ENCODE measurements at regions of chr17 and their contacts with region 1.

Region 1: DNA sequence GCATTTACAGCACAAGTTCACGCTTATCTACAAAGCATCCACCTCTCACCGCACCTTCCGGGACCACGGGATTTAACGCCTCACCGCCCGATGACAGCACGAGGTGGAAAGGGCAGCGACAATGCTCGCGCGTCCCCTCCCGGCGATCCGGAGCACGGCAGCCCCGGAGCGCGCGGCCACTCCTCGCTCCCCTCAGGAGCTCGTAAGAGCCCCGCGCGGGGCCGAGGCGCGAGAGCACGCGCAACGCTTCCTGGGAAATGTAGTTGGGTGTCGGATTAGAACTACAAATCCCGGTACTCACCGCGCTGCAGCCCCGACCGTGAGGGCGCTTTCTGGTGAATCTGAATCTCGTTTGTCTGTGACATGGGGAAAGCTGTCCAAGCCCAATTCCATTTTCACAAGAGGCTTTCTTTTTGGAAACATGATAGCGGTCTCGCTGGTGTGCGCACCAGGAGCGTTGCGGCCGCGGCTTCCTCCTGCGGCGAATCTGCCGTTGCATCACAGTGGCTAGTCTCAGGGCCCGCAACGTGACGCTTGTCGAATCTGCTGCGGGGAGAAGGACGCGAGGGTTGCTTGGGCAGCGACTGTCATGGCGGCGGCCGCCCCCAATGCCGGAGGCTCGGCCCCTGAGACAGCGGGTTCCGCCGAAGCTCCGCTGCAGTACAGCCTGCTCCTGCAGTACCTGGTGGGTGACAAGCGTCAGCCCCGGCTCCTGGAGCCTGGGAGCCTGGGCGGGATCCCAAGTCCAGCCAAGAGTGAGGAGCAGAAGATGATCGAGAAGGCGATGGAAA is at the start of gene TIMM22:
- DNase-seq: peak; percentile 88 to 91
- ATAC-seq: peak; percentile 93 to 94
- H3K4me3 ChIP-seq: peak within 1 kb of the TSS; percentile 75 to 98 (median 97)
- H3K27ac ChIP-seq: peak within 1 kb of the TSS; percentile 88 to 95 (median 92)
- H3K4me1 ChIP-seq: peaks cover 40 to 41% of the 10 kb centered on the region in 2 donors
- H3K27me3 ChIP-seq: no peaks in the 10 kb centered on the region
- CTCF ChIP-seq: peak; percentile 97 to 99 (median 98)
- POLR2A ChIP-seq: peak; percentile 76 to 83
- total RNA-seq, gene TIMM22: 14.4 to 16.1 (median 15.3) TPM

Region 2: DNA sequence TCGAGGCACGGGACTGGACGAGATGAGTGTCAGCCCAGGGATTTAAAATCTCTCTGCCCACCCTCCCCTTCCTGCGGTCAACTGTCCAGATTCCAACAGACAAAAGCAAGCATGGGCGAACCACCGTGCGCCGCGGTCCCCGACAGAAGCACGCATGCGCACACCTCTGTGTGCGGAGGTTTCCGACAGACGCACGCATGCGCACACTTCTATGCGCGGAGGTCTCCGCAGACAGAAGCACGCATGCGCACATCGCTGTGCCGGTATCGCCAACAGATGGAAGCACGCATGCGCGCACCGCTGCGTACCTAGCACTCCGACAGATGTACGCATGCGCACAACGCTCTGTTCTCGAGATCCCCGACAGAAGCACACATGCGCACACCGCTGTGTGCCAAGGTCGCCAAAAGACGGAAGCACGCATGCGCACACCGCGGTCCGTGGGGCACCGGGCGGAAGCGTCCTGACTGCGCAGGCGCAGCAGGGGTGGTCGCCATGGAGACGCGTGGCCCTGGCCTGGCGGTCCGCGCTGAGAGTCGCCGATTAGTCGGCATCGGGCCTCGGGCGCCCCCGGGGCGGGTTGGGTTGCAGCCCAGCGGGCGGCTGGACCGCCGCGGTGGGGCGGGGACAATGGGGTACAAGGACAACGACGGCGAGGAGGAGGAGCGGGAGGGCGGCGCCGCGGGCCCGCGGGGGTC is 586.8 kb before region 1 on chr17:
- in situ Hi-C with region 1: no loop called
- intact Hi-C with region 1: loop called (anchors 5 kb)
- DNase-seq: peak; percentile 99
- ATAC-seq: peak; percentile 97 to 98
- H3K4me3 ChIP-seq: peak overlapping the region; percentile 70 to 94 (median 82)
- H3K27ac ChIP-seq: peak overlapping the region; percentile 70 to 80 (median 72)
- H3K4me1 ChIP-seq: peaks cover 13 to 14% of the 10 kb centered on the region in 2 donors
- H3K27me3 ChIP-seq: no peaks in the 10 kb centered on the region
- CTCF ChIP-seq: no peak
- POLR2A ChIP-seq: peak in 1 of 2 donors; percentile 49

Region 3: GRCh38 chr17:794876-795275 is 201.9 kb before region 1 on chr17:
- in situ Hi-C with region 1: no loop called
- intact Hi-C with region 1: loop called (anchors 5 kb)
- DNase-seq: peak; percentile 79 to 82
- ATAC-seq: peak; percentile 76 to 80
- H3K4me3 ChIP-seq: peak overlapping the region; percentile 27 to 74 (median 51)
- H3K27ac ChIP-seq: peak overlapping the region; percentile 67 to 78 (median 74)
- H3K4me1 ChIP-seq: peaks cover 27 to 30% of the 10 kb centered on the region in 2 donors
- H3K27me3 ChIP-seq: no peaks in the 10 kb centered on the region
- CTCF ChIP-seq: peak; percentile 90 to 96 (median 92)
- POLR2A ChIP-seq: no peak

Region 4: GRCh38 chr17:869567-870525 is 126.9 kb before region 1 on chr17:
- in situ Hi-C with region 1: no loop called
- intact Hi-C with region 1: loop called (anchors 1 kb)
- DNase-seq: peak; percentile 90 to 97
- ATAC-seq: peak; percentile 78
- H3K4me3 ChIP-seq: peak overlapping the region; percentile 24 to 55 (median 42)
- H3K27ac ChIP-seq: peak overlapping the region; percentile 92 to 99 (median 96)
- H3K4me1 ChIP-seq: peaks cover 35 to 38% of the 10 kb centered on the region in 2 donors
- H3K27me3 ChIP-seq: no peaks in the 10 kb centered on the region
- CTCF ChIP-seq: peak in 2 of 5 experiments; percentile 11
- POLR2A ChIP-seq: peak; percentile 69 to 75

Region 5: GRCh38 chr17:969811-970355 is 26.9 kb before region 1 on chr17:
- in situ Hi-C with region 1: no loop called
- intact Hi-C with region 1: no loop called
- DNase-seq: no peak
- ATAC-seq: peak; percentile 40 to 44
- H3K4me3 ChIP-seq: peak overlapping the region; percentile 11 to 48 (median 28)
- H3K27ac ChIP-seq: peak overlapping the region; percentile 45 to 77 (median 64)
- H3K4me1 ChIP-seq: peaks cover 17 to 32% of the 10 kb centered on the region in 2 donors
- H3K27me3 ChIP-seq: no peaks in the 10 kb centered on the region
- CTCF ChIP-seq: no peak
- POLR2A ChIP-seq: no peak

Region 6: GRCh38 chr17:1055751-1056645 is 59.2 kb after region 1 on chr17:
- in situ Hi-C with region 1: loop called in 1 of 4 experiments (anchors 5 kb)
- intact Hi-C with region 1: loop called (anchors 2 kb)
- DNase-seq: peak; percentile 32 to 59
- ATAC-seq: peak; percentile 81 to 90
- H3K4me3 ChIP-seq: no peak overlapping the region
- H3K27ac ChIP-seq: peak overlapping the region in 3 of 4 donors; percentile 27 to 58 (median 37)
- H3K4me1 ChIP-seq: peaks cover 5 to 6% of the 10 kb centered on the region in 2 donors
- H3K27me3 ChIP-seq: no peaks in the 10 kb centered on the region
- CTCF ChIP-seq: peak; percentile 59 to 86 (median 83)
- POLR2A ChIP-seq: no peak